HEK293 (cell line): ENCODE measurements at regions of chr1 and their contacts with region 1.

Region 1: DNA sequence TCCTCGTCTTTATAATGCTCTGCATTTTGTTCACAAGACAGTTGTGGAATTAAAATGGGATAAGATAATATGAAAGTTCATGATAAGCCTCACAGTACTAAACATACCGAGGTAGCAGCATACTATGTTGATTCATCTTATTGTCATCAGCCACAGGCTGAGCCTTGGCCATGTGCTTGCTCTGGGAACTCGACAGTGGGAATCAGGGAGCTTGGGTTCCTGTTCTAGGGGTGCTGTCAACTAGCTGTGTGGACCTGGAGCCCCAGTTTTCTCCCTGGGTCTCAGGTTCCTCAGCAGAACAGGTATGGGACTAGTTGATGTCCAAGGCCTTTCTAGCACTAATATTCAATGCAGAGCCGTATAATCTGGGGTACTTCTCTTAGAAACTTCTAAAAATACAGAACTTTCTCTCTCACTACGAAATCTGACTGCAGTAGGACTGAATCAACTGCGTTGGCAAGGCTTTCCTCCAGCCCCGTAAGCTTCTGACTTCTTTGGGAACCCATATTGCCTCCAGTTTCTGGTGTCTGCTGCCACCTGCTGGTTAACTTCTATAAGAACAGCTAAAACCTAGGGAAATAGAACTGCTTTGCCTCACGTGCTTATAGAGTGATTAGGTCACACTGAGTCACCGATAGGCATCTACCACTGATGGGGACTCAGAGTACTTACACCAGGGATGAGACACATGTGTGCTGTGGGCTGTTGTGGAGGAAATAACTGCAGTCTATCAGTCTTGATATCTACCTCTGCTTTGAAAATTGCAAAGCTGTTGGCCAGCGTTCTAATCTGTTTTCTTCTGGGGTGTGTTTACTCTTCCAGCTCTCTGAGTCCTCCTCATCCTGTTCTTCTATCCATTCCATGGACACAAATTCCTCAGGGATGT is 110.9 kb downstream of the RGL1 start:
- H3K4me3 ChIP-seq: no peak overlapping the region
- H3K27ac ChIP-seq: no peak overlapping the region
- H3K4me1 ChIP-seq: no peaks in the 10 kb centered on the region
- CTCF ChIP-seq: peak; percentile 73

Region 2: DNA sequence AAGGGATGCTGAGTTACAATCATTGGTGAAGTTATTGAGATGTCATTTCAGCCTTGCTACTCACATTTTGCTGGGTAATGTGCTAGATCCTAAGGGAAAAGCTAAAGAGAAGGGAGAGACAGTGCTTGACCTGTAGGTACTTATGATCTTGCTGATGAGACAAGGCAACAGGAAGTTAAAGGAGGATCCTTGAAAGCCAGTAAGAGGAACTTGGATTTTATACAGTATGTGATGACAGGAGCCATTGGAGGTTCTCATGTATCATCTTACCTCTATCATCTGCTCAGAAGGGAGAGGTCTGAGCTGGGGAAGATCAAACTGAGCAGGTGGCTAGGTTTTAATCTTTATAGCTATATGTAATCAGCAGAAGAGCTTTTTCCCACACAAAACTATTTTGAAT is 269.1 kb before region 1 on chr1:
- CTCF ChIA-PET with region 1: interaction called, 128 read pairs
- POLR2A ChIA-PET with region 1: no interaction called
- H3K4me3 ChIP-seq: no peak overlapping the region
- H3K27ac ChIP-seq: no peak overlapping the region
- H3K4me1 ChIP-seq: no peaks in the 10 kb centered on the region
- CTCF ChIP-seq: no peak

Region 3: DNA sequence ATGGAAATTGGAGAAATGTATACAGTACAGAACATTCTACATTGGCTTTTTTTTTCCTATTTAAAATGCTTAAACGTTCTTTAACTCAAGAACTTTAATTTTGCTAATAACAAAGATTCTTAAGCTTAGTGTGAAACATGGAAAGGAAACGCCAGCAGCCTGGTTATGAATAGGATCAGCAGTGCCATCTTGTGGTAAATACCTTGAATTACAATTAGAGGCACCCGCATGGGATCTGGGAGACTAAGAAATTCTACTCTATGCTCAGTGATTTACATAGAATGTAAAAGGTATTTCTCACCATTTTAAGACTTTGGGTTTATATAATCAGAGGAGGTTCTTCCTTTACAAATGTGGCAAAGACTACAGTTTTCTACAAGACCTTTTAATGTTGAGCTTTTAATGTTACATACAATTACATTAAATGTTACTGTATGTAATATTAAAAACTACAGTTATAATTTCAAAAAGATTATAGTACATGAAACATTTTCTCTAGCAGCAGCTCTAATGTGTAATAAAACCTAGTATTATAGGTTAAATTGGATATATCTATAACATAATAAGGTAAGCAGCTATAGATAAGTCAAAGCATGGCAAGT is 230.7 kb before region 1 on chr1:
- CTCF ChIA-PET with region 1: interaction called, 55 read pairs
- POLR2A ChIA-PET with region 1: no interaction called
- H3K4me3 ChIP-seq: no peak overlapping the region
- H3K27ac ChIP-seq: no peak overlapping the region
- H3K4me1 ChIP-seq: no peaks in the 10 kb centered on the region
- CTCF ChIP-seq: 0 out of 2 replicates have a peak, but pooled peaks have one; percentile 20

Region 4: DNA sequence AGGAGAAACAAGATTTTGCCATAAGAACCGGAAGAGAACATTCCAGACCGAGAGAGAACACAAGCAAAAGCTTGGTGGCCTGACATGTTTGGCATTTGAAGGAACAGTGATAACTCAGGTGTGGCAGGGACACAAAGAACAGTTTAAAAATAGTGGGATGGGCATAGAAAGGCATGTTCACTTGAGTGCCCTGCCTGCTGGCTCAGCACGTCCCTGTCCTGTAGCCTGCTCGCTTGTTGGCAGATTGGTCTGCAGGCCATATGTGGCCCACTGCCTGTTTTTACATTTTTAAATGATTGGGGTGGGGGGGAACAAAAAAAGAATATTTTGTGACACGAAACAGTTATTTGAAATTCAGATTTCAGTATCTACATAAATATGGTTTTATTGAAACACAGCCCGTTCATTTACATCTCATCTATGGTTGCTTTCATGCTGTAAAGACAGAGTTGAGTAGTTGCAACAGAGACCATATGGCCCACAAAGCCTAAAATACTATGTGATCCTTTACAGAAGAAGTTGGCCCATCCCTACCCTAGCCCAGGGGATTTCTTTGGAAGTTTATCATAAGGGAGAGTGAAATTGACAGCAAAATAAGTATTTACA is 10.3 kb before region 1 on chr1:
- CTCF ChIA-PET with region 1: interaction called, 12 read pairs
- POLR2A ChIA-PET with region 1: no interaction called
- H3K4me3 ChIP-seq: no peak overlapping the region
- H3K27ac ChIP-seq: no peak overlapping the region
- H3K4me1 ChIP-seq: no peaks in the 10 kb centered on the region
- CTCF ChIP-seq: no peak

Region 5: GRCh38 chr1:183942933-183943693 is 27.2 kb after region 1 on chr1:
- CTCF ChIA-PET with region 1: interaction called, 10 read pairs
- POLR2A ChIA-PET with region 1: interaction called, 5 read pairs
- H3K4me3 ChIP-seq: no peak overlapping the region
- H3K27ac ChIP-seq: 0 out of 2 replicates have a peak overlapping the region, but pooled peaks have one; percentile 6
- H3K4me1 ChIP-seq: peaks cover 8% of the 10 kb centered on the region; the same call in 1 of the 2 replicates
- CTCF ChIP-seq: peak; percentile 25; the same call in 1 of the 2 replicates

Region 6: GRCh38 chr1:184044603-184045376 is 128.9 kb after region 1 on chr1:
- CTCF ChIA-PET with region 1: no interaction called
- POLR2A ChIA-PET with region 1: no interaction called
- H3K4me3 ChIP-seq: no peak overlapping the region
- H3K27ac ChIP-seq: no peak overlapping the region
- H3K4me1 ChIP-seq: no peaks in the 10 kb centered on the region
- CTCF ChIP-seq: no peak